Mammary epithelial cell (primary cell): ENCODE measurements at regions of chr2 and their contacts with region 1.

Region 1: DNA sequence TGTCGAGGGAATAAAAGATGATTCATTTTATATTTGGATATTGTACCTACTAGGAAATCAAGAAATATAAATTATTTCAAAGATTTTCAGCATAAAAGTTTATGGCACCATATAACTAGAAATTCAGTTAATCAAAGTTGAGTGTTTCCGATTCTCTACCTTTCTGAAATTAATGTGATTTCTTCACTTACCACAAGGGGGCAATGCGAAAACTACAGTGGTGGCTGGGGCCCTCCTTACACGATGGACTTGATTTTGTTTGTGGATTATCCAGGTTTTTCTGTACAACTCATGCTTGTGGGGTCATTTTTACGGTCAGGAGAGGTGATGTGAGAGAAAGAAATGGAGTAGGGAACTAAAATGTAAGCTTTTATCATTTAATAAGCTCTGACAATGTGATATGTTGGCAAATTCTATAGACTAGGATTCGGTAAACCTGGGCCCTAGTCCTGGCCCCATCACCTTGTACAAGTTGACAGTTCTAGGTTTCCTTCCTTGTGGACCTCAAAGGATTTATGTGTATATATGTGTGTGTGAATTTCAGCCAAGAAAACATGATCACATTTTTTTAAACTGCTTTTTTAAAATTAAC is 47.6 kb downstream of the G6PC2 start:
- DNase-seq: no peak
- H3K4me3 ChIP-seq: no peak overlapping the region
- H3K27ac ChIP-seq: no peak overlapping the region
- H3K4me1 ChIP-seq: peaks cover 5% of the 10 kb centered on the region
- H3K27me3 ChIP-seq: no peaks in the 10 kb centered on the region
- CTCF ChIP-seq: peak; percentile 63 to 66

Region 2: DNA sequence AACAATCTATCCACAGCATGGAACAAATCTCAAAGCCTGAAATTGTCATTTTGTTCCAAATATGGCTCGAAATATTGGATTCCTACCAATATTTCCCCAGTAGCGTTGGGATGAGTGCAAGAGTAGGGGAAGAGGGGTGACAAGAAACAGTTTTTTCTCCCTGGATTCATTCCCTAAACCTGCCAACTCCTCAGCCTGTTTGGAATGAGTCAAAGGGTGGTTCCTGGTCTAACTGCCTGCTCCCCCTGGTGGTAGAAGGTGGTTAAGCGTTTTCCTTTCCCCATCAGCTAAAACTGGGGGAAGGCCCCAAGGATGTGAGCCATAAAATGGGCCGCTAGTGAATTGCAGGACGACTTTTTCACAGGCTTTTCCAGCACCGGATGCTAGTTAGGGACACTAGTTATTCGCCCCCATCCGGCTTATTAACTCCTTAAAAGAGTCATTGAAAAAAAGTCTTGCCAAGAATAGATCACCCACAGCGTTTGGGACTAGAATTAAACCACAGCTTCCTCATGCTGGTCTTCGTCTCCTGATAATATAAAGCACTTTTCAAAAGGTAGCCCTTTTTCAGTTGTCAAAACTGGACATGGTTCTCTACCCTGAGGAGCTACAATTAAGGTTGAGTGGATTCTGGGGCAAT is 193.1 kb after region 1 on chr2:
- CTCF ChIA-PET with region 1: no interaction called
- dilution Hi-C with region 1: no loop called
- in situ Hi-C with region 1: loop called (anchors 10 kb)
- intact Hi-C with region 1: loop called (anchors 1 kb)
- DNase-seq: peak; percentile 44
- H3K4me3 ChIP-seq: no peak overlapping the region
- H3K27ac ChIP-seq: no peak overlapping the region
- H3K4me1 ChIP-seq: no peaks in the 10 kb centered on the region
- H3K27me3 ChIP-seq: no peaks in the 10 kb centered on the region
- CTCF ChIP-seq: peak; percentile 89 to 91

Region 3: GRCh38 chr2:169221745-169222369 is 273.1 kb after region 1 on chr2:
- CTCF ChIA-PET with region 1: no interaction called
- dilution Hi-C with region 1: no loop called
- in situ Hi-C with region 1: no loop called
- intact Hi-C with region 1: loop called (anchors 2 kb)
- DNase-seq: peak; percentile 3
- H3K4me3 ChIP-seq: no peak overlapping the region
- H3K27ac ChIP-seq: no peak overlapping the region
- H3K4me1 ChIP-seq: no peaks in the 10 kb centered on the region
- H3K27me3 ChIP-seq: no peaks in the 10 kb centered on the region
- CTCF ChIP-seq: peak; percentile 46 to 51